ENCODE measurements at regions of chr14 and their contacts with region 1.

Region 1: DNA sequence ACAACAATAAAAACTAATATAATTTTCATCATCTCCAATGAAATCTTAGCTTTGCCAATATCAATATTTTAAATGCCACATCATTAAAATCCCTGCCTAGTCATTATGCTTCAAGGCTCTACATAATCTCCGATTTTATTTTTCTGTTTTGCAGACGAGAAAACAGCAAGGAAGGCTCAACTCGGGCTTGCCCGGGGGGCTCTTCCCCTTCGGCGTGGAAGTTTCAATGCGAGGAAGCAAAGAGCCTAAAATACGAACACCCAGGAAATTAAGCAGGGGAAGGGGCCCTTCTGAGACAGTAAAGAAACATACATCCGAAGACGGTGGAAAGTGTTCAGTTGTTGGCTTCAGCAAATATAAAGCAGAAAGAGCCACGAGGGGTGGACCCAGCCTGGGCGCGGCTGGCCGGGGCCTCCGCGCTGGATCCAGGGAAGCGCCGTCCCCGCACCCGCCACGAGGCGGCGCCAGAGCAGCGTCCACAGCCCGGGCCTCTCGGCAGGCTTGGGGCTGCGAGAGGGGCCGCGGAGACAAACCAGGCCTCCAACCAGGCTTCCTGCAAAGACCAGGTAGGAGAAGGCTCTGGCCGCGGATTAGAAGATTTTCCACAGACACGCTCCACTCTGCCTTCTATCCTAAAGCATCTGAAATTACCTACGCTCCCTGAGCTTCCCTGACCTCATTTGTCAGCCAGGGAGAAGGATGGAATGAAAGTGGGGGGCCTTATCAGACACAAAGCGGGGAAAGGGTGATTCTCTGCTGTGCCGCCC is 77.2 kb downstream of the SERPINA3 start:
- DNase-seq: no peak
- ATAC-seq: peak; percentile 98
- H3K4me3 ChIP-seq: no peak overlapping the region
- H3K27ac ChIP-seq: no peak overlapping the region
- H3K4me1 ChIP-seq: no peaks in the 10 kb centered on the region
- H3K27me3 ChIP-seq: peaks cover 0 to 2% of the 10 kb centered on the region in 2 experiments; a peak in 1 of 4 replicates
- CTCF ChIP-seq: peak; percentile 79 to 95 (median 85)
- EP300 ChIP-seq: no peak
- POLR2A ChIP-seq: no peak
- RAD21 ChIP-seq: peak; percentile 77

Region 2: GRCh38 chr14:95098984-95099599 is 409.7 kb after region 1 on chr14:
- CTCF ChIA-PET with region 1: interaction called, 3 read pairs
- POLR2A ChIA-PET with region 1: no interaction called
- RAD21 ChIA-PET with region 1: no interaction called
- SMC1A ChIA-PET with region 1: no interaction called
- in situ Hi-C with region 1: no loop called
- intact Hi-C with region 1: loop called (anchors 10 kb)
- DNase-seq: no peak
- ATAC-seq: peak; percentile 66
- H3K4me3 ChIP-seq: no peak overlapping the region
- H3K27ac ChIP-seq: no peak overlapping the region
- H3K4me1 ChIP-seq: no peaks in the 10 kb centered on the region
- H3K27me3 ChIP-seq: no peaks in the 10 kb centered on the region
- CTCF ChIP-seq: peak; percentile 23 to 43 (median 40); a peak in 5 of 6 replicates
- EP300 ChIP-seq: no peak
- POLR2A ChIP-seq: no peak
- RAD21 ChIP-seq: no peak

Region 3: GRCh38 chr14:95389471-95390011 is 700.1 kb after region 1 on chr14:
- CTCF ChIA-PET with region 1: no interaction called
- POLR2A ChIA-PET with region 1: no interaction called
- RAD21 ChIA-PET with region 1: no interaction called
- SMC1A ChIA-PET with region 1: no interaction called
- in situ Hi-C with region 1: loop called (anchors 25 kb)
- intact Hi-C with region 1: no loop called
- DNase-seq: no peak
- ATAC-seq: no peak
- H3K4me3 ChIP-seq: no peak overlapping the region
- H3K27ac ChIP-seq: no peak overlapping the region
- H3K4me1 ChIP-seq: no peaks in the 10 kb centered on the region
- H3K27me3 ChIP-seq: no peaks in the 10 kb centered on the region; a peak in 1 of 4 replicates
- CTCF ChIP-seq: no peak
- EP300 ChIP-seq: no peak
- POLR2A ChIP-seq: no peak
- RAD21 ChIP-seq: no peak